Posterior vena cava (tissue), 2 donors: ENCODE measurements at regions of chr9 and their contacts with region 1.

Region 1: DNA sequence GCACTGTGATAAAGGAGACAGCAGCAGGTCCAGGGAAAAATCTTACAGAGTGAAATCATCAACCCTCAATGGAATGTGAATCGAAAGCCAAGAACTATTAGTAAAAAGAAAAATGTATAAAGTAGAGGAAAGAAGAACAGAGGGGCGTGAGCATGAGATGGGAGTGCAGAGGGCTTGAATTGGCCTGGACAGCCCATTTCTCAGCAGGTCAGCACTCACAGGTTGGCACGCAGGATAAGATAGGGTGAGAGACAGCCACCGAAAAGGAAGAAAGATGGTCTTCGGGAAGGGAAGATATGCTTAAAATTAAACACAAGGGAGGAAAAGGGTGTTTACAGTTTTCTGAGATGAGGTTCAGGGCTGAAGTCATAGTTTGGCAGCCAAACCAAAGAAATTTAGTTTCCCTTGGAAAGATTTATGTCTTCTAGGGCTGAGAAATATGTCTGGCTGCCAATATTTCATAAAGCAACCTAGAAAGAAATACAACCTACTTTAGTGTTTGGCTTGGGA is 524.7 kb downstream of the SPATA31D1 start:
- DNase-seq: no peak

Region 2: DNA sequence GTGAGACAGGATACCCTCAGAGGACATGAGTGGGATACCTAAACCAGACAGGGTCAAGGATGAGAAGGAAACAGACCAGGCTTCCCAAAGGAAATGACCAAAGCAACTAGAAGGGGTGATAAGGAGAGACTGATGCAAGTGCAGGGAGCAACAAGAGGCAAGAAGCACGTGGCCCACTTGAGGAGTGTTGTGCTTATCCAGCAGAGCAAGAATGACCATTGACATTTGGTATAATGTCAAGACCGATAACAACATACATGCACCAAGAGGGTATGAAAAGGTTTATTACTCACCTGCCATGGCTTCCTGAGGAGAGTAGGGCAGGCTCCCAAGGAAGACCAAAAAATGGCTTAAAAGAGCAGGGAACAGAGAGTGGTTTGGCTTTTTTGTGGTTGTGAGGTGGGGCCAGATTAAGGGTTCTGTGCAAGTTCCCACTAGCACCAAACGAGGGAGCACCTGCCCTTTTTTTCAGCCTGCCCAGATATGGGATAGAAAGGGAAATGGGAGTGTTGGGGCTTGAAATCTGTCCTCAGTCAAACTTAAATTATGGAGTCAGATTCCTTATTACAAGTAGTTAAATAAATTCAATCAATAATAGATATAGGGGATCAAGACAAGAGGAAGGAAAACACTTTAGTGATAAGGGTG is 36.0 kb after region 1 on chr9:
- intact Hi-C with region 1: loop called in 1 of 2 experiments (anchors 1 kb)
- DNase-seq: no peak

Region 3: GRCh38 chr9:82593501-82593900 is 80.2 kb after region 1 on chr9:
- intact Hi-C with region 1: no loop called
- DNase-seq: no peak